HCT116 (cell line): ENCODE measurements at regions of chr3 and their contacts with region 1.

Region 1: DNA sequence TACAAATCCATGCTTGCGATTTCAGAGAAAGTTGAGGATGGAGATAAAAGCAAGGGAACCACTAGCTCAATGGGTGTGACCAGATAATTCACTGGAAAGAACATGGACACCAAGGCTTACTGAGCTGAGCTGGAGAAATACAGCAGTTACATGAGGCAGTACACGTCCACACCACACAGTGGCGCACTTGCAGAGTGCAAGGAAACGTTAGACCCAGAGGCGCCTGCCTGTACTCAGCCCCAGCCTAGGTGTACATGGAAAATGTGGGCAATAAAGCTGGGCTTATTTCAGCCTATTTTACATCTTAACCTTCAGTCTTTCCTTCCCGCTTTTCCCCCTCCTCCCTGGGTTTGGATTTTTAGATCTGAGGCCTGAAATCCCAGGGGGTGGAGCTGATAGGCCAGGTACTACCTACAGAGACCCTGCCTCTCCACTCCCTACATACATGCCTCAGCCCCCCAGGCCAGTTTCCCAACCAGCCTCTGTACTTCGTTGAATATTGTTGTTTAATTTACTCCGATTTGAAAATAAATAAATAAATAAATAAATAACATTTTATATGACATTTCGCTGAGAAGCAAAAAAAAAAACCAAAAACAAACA is 60.1 kb downstream of the PCOLCE2 start:
- DNase-seq: peak; percentile 68
- ATAC-seq: peak; percentile 100
- H3K4me3 ChIP-seq: no peak overlapping the region
- H3K27ac ChIP-seq: no peak overlapping the region
- H3K4me1 ChIP-seq: no peaks in the 10 kb centered on the region
- H3K27me3 ChIP-seq: no peaks in the 10 kb centered on the region
- CTCF ChIP-seq: peak; percentile 89 to 92 (median 91)
- POLR2A ChIP-seq: no peak
- RAD21 ChIP-seq: peak; percentile 95

Region 2: GRCh38 chr3:142808103-142808917 is 20.5 kb before region 1 on chr3:
- CTCF ChIA-PET with region 1: interaction called, 11 read pairs
- POLR2A ChIA-PET with region 1: no interaction called
- RAD21 ChIA-PET with region 1: no interaction called
- intact Hi-C with region 1: no loop called
- DNase-seq: peak; percentile 50
- ATAC-seq: 0 out of 2 replicates have a peak, but pooled peaks have one; percentile 30
- H3K4me3 ChIP-seq: no peak overlapping the region
- H3K27ac ChIP-seq: no peak overlapping the region
- H3K4me1 ChIP-seq: peaks cover 0 to 5% of the 10 kb centered on the region in 2 experiments; a peak in 1 of 4 replicates
- H3K27me3 ChIP-seq: no peaks in the 10 kb centered on the region
- CTCF ChIP-seq: no peak
- POLR2A ChIP-seq: no peak
- RAD21 ChIP-seq: no peak

Region 3: DNA sequence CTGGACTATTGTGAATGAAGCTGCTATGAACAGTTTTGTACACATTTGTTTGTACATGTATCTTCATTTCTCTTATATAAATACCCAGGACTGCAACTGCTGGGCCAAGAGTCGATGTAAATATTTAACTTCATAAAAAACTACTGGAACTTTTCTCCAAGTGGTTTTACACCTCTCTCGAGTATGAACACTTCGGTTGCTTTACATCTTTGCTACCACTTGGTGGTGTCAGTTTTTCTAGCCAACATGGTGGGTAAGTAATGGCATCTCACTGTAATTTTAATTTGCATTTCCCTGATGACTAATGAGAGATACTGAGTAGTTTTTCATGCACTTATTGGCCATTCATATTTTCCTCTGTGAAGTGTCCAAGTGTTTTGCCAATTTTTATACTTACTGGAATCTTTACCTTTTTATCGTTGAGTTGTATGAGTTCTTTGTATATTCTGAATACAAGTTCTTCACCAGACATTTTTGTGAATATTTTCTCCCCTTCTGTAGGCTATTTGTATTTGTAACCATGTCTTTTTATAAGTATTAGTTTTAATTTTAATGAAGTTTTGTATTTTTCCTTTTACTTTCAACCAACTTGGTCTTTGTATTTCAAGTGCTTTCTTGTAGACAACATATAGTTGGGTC is 15.7 kb after region 1 on chr3:
- CTCF ChIA-PET with region 1: interaction called, 10 read pairs
- POLR2A ChIA-PET with region 1: no interaction called
- RAD21 ChIA-PET with region 1: no interaction called
- intact Hi-C with region 1: no loop called
- DNase-seq: peak; percentile 48
- ATAC-seq: peak; percentile 85
- H3K4me3 ChIP-seq: no peak overlapping the region
- H3K27ac ChIP-seq: no peak overlapping the region
- H3K4me1 ChIP-seq: no peaks in the 10 kb centered on the region
- H3K27me3 ChIP-seq: no peaks in the 10 kb centered on the region
- CTCF ChIP-seq: peak; percentile 57 to 64 (median 62)
- POLR2A ChIP-seq: no peak
- RAD21 ChIP-seq: peak; percentile 50

Region 4: GRCh38 chr3:142904639-142905436 is 76.0 kb after region 1 on chr3:
- CTCF ChIA-PET with region 1: interaction called, 26 read pairs
- POLR2A ChIA-PET with region 1: no interaction called
- RAD21 ChIA-PET with region 1: interaction called in 1 of 2 experiments, 3 read pairs
- intact Hi-C with region 1: loop called (anchors 1 kb)
- DNase-seq: no peak
- ATAC-seq: peak; percentile 81
- H3K4me3 ChIP-seq: no peak overlapping the region
- H3K27ac ChIP-seq: no peak overlapping the region
- H3K4me1 ChIP-seq: peaks cover 0 to 9% of the 10 kb centered on the region in 2 experiments; a peak in 2 of 4 replicates
- H3K27me3 ChIP-seq: no peaks in the 10 kb centered on the region
- CTCF ChIP-seq: peak; percentile 13 to 51 (median 41); a peak in 4 of 6 replicates
- POLR2A ChIP-seq: no peak
- RAD21 ChIP-seq: peak; percentile 73

Region 5: GRCh38 chr3:142987080-142987700 is 158.4 kb after region 1 on chr3:
- CTCF ChIA-PET with region 1: interaction called, 16 read pairs
- POLR2A ChIA-PET with region 1: no interaction called
- RAD21 ChIA-PET with region 1: interaction called in 1 of 2 experiments, 3 read pairs
- intact Hi-C with region 1: loop called (anchors 1 kb)
- DNase-seq: no peak
- ATAC-seq: peak; percentile 72
- H3K4me3 ChIP-seq: no peak overlapping the region
- H3K27ac ChIP-seq: no peak overlapping the region
- H3K4me1 ChIP-seq: no peaks in the 10 kb centered on the region
- H3K27me3 ChIP-seq: no peaks in the 10 kb centered on the region
- CTCF ChIP-seq: peak; percentile 44 to 76 (median 76)
- POLR2A ChIP-seq: no peak
- RAD21 ChIP-seq: peak; percentile 76

Region 6: GRCh38 chr3:143464850-143465249 is 636.0 kb after region 1 on chr3:
- CTCF ChIA-PET with region 1: no interaction called
- POLR2A ChIA-PET with region 1: no interaction called
- RAD21 ChIA-PET with region 1: no interaction called
- intact Hi-C with region 1: no loop called
- DNase-seq: no peak
- ATAC-seq: no peak
- H3K4me3 ChIP-seq: no peak overlapping the region
- H3K27ac ChIP-seq: no peak overlapping the region
- H3K4me1 ChIP-seq: 0 out of 4 replicates have a peak, but pooled peaks cover 0 to 3% of the 10 kb centered on the region in 2 experiments
- H3K27me3 ChIP-seq: no peaks in the 10 kb centered on the region
- CTCF ChIP-seq: no peak
- POLR2A ChIP-seq: no peak
- RAD21 ChIP-seq: no peak